HEK293T (cell line): ENCODE measurements at regions of chr17 and their contacts with region 1.

Region 1: GRCh38 chr17:16215273-16215964 is at the start of gene NCOR1:
- DNase-seq: peak; percentile 79

Region 2: DNA sequence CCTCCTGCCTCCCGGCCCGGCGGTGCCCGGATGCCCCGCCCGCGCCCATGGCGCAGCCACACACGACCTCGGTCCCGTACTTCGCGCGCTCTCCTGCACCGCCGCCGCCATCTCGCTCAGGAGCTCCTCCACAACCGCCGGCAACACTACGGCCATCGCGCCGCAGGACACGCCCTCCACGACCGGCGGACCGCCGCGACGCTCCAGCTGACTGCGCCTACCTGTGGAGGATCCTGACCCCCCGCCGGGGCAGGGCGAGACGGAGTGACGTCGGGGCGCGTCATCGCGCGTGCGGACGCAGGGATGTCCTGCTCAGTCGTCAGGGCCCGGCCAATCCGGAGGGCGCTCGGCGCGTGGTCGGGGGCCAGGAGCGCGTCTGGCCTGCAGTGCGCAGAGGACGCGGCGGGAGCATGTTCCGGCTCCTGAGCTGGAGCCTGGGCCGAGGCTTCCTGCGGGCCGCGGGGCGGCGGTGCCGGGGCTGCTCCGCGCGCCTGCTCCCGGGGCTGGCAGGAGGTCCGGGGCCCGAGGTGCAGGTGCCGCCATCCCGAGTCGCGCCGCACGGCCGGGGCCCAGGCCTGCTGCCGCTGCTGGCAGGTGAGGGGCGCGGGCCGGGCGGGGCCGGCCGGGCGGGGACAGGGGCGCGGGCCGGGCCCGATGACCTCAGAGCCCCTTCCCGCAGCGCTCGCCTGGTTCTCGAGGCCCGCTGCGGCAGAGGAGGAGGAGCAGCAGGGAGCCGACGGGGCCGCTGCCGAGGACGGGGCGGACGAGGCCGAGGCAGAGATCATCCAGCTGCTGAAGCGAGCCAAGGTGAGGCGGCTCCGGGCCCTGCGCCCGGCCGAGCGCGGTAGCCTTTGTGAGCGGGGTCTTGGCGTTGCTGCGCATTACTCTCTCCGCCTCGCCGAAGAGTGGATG is 215.7 kb before region 1 on chr17 and contains the starts of genes TTC19 and ZSWIM7:
- CTCF ChIA-PET with region 1: no interaction called
- POLR2A ChIA-PET with region 1: interaction called, 20 read pairs
- DNase-seq: peak; percentile 95

Region 3: DNA sequence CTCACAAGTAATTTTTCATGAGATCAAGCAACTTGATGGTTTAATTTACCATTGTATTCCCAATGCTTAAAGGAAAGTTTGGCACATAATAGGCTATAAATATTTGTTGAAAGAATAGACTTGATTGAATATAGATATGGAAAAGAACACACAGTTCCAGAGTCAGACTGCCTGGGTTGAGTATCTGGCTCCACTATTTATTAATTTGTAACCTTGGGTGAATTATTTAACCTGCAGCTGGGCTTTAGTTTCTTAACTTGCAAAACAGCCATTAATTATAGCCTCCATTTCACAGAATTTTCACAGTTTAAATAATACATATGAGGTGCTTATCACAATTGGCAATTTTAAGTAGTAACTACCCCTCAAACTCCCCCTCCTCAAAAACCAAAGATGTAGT is 73.7 kb before region 1 on chr17:
- CTCF ChIA-PET with region 1: no interaction called
- POLR2A ChIA-PET with region 1: no interaction called
- DNase-seq: no peak

Region 4: GRCh38 chr17:16199093-16199492 is 16.3 kb before region 1 on chr17:
- CTCF ChIA-PET with region 1: no interaction called
- POLR2A ChIA-PET with region 1: interaction called, 64 read pairs
- DNase-seq: no peak

Region 5: DNA sequence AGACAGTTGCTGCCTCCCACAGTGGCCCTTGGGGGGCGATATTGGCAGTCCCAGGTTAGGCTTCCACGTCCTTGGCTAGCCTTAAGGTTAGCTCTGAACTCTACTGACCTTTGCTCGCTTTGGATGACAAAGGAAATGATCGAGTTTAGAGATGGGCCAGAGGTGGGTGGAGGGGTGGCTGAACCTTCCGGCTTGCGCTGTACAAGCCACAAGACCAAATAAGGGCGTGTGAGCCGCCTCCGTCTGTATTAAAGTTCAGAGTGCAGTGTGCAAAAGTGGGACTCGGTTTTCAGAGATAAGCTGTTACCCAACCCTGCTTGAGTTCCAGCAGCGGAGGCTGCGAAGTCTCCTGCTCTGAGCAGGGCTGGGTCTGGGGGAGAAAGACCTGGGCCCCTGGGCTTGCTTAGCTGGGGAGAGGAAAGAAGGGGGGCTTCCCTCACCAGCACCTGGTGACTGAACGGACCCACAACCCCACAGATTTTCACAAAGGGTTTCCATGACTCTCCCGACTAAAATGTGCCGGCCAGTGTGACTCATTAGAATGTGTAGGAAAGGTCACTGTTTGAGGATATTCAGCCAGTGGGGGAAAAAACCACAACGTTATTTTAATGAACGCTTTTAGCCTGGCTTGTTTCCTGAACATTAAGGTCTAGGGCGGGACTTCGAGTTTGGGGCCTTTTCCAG is 70.7 kb after region 1 on chr17:
- CTCF ChIA-PET with region 1: interaction called, 6 read pairs
- POLR2A ChIA-PET with region 1: interaction called, 20 read pairs
- DNase-seq: peak; percentile 53

Region 6: GRCh38 chr17:16304830-16305229 is 89.4 kb after region 1 on chr17:
- CTCF ChIA-PET with region 1: interaction called, 3 read pairs
- POLR2A ChIA-PET with region 1: interaction called, 26 read pairs
- DNase-seq: peak; percentile 39

Region 7: DNA sequence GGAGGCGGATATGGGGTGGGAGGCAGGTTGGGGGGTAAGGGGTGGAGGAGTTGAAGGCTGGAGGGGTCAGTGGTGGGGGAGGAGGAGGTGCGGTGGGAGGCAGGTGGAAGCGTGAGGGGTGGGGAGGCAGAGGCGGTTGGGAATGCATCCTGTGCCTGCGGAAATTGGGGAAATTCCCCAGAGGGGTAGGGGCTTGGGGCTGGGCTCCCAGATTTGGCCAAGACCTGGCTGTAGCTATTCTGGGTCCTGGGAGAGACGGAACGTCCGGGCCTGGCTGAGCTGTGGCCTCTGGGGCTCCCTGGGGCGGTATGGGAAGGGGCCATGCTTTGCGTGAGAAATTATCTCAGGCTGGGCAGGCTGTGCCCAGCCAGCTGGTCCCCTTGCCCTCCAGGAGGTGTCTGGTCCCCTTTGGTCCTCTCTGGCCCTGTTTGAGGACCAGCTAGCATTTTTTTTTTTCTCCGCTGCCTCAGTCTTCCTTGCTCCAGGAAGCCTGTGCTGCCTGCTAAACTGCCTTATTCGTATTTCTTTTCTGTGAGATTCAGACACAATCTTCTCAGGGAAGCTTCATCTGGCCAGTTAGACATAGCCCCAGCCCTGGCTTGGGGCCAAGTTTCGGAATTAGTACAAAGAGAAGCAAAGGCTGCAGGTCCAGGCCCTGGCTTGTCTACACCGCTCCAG is 192.6 kb after region 1 on chr17:
- CTCF ChIA-PET with region 1: no interaction called
- POLR2A ChIA-PET with region 1: no interaction called
- DNase-seq: no peak